ENCODE measurements at regions of chr16 and their contacts with region 1.

Region 1: GRCh38 chr16:74186561-74186971 is 110.0 kb upstream of the PSMD7 start:
- DNase-seq: no peak
- H3K4me3 ChIP-seq: no peak overlapping the region
- H3K27ac ChIP-seq: no peak overlapping the region
- H3K4me1 ChIP-seq: no peaks in the 10 kb centered on the region
- H3K27me3 ChIP-seq: no peaks in the 10 kb centered on the region
- CTCF ChIP-seq: no peak
- EP300 ChIP-seq: no peak
- POLR2A ChIP-seq: no peak

Region 2: GRCh38 chr16:74117798-74118197 is 68.8 kb before region 1 on chr16:
- in situ Hi-C with region 1: no loop called
- intact Hi-C with region 1: loop called (anchors 2 kb)
- DNase-seq: no peak
- H3K4me3 ChIP-seq: no peak overlapping the region
- H3K27ac ChIP-seq: no peak overlapping the region
- H3K4me1 ChIP-seq: no peaks in the 10 kb centered on the region
- H3K27me3 ChIP-seq: no peaks in the 10 kb centered on the region
- CTCF ChIP-seq: no peak
- EP300 ChIP-seq: no peak
- POLR2A ChIP-seq: no peak

Region 3: GRCh38 chr16:74201576-74201975 is 15.0 kb after region 1 on chr16:
- in situ Hi-C with region 1: no loop called
- intact Hi-C with region 1: loop called (anchors 1 kb)
- DNase-seq: no peak
- H3K4me3 ChIP-seq: no peak overlapping the region
- H3K27ac ChIP-seq: no peak overlapping the region
- H3K4me1 ChIP-seq: no peaks in the 10 kb centered on the region
- H3K27me3 ChIP-seq: no peaks in the 10 kb centered on the region
- CTCF ChIP-seq: no peak
- EP300 ChIP-seq: no peak
- POLR2A ChIP-seq: no peak

Measured in transverse colon (tissue), 4 donors.